Adrenal gland (tissue), 19 donors: ENCODE measurements at regions of chr17 and their contacts with region 1.

Region 1: GRCh38 chr17:49798182-49798581 is 9.7 kb downstream of the KAT7 start:
- DNase-seq: peak; percentile 46 to 81 (median 70)
- H3K4me3 ChIP-seq: no peak overlapping the region
- H3K27ac ChIP-seq: peak overlapping the region in 4 of 5 donors; percentile 5 to 61 (median 38)
- H3K4me1 ChIP-seq: peaks cover 11 to 14% of the 10 kb centered on the region in 2 donors
- H3K27me3 ChIP-seq: no peaks in the 10 kb centered on the region
- CTCF ChIP-seq: no peak
- POLR2A ChIP-seq: no peak

Region 2: DNA sequence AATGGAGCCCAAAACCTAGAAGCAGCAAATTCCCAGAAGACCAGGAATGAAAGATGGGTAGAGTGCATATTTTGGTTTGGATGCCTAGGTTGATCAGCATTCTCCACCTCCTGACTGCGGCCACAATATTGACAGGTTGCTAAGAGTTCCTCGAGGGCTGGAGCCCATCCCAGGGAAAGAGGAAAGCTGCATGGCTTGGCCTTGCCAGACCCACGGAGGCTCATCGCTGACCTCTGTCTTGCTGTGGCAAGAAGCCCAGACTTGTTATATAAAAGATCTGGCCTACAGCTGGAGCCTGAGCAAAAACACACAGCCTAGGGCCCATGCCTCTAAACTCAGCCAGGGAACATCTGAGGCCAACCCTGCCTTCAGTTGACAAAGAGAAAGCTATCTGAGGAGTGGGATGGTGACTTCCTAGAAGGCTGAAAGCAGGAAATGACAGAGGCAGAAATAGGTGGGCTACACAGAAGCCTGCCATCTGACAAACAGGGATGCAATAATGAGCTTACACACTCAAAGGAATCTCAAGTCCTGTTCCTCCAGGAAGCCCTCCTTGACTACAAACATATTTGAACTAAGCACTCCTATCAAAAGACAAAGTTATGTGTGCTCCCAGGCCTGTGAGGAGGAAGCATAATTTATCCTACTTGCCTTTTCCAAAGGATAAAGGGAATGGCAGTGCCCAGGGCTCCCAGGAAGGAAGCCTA is 68.0 kb before region 1 on chr17:
- intact Hi-C with region 1: no loop called
- DNase-seq: peak; percentile 80 to 96 (median 91)
- H3K4me3 ChIP-seq: no peak overlapping the region
- H3K27ac ChIP-seq: peak overlapping the region in 4 of 5 donors; percentile 48 to 78 (median 70)
- H3K4me1 ChIP-seq: peaks cover 10 to 28% of the 10 kb centered on the region in 2 donors
- H3K27me3 ChIP-seq: no peaks in the 10 kb centered on the region
- CTCF ChIP-seq: no peak
- POLR2A ChIP-seq: no peak

Region 3: GRCh38 chr17:49843774-49844350 is 45.7 kb after region 1 on chr17:
- intact Hi-C with region 1: loop called in 1 of 2 experiments (anchors 10 kb)
- DNase-seq: no peak
- H3K4me3 ChIP-seq: no peak overlapping the region
- H3K27ac ChIP-seq: no peak overlapping the region
- H3K4me1 ChIP-seq: peaks cover 0 to 20% of the 10 kb centered on the region in 2 donors
- H3K27me3 ChIP-seq: no peaks in the 10 kb centered on the region
- CTCF ChIP-seq: peak in 1 of 6 experiments; percentile 11
- POLR2A ChIP-seq: no peak